Common myeloid progenitor, CD34-positive (primary cell): ENCODE measurements at regions of chr3 and their contacts with region 1.

Region 1: DNA sequence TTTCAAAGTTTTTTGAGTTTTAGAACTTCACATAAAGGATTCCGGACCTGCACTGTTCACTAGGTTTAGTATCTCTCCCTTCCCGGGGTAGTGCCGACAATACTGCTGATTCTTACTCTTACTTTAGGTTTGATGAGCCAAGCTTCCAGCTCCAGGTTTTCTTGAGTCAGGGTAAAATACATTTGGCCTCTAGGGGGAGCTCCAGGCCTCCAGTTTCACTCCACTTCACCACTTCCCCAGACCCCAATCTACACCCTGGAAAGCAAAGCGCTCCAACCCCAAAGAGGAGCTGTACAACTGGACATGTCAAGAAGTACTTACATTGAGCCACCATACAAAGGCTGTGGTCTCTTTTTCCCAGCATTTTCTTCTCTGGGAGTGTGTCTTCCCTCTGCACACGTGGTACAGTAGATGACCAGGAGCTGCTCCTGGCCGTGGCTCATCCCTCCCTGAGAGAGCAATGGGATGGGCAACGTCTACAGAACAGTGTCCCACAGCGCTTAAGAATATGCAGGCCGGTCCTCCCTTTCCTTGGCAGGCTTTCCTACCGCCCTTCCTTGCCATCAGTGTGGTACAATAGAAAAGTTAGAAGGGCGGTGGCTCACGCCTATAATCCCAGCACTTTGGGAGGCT is 93.9 kb upstream of the CCDC80 start:
- DNase-seq: peak; percentile 82 to 89 (median 87)
- H3K4me3 ChIP-seq: no peak overlapping the region
- H3K27ac ChIP-seq: no peak overlapping the region
- H3K4me1 ChIP-seq: peaks cover 7 to 12% (median 9%) of the 10 kb centered on the region in 4 experiments
- H3K27me3 ChIP-seq: peaks cover 0 to 2% (median 0%) of the 10 kb centered on the region in 5 experiments

Region 2: GRCh38 chr3:112642912-112643506 is 91.8 kb before region 1 on chr3:
- CTCF ChIA-PET with region 1: interaction called, 19 read pairs
- POLR2A ChIA-PET with region 1: no interaction called
- DNase-seq: peak; percentile 81 to 92 (median 90)
- H3K4me3 ChIP-seq: peak overlapping the region in 2 of 7 experiments; percentile 13 to 61
- H3K27ac ChIP-seq: no peak overlapping the region
- H3K4me1 ChIP-seq: peaks cover 0 to 5% (median 3%) of the 10 kb centered on the region in 4 experiments
- H3K27me3 ChIP-seq: peaks cover 0 to 16% (median 6%) of the 10 kb centered on the region in 5 experiments

Region 3: GRCh38 chr3:112721231-112721630 is 13.6 kb before region 1 on chr3:
- CTCF ChIA-PET with region 1: no interaction called
- POLR2A ChIA-PET with region 1: no interaction called
- DNase-seq: no peak
- H3K4me3 ChIP-seq: no peak overlapping the region
- H3K27ac ChIP-seq: no peak overlapping the region
- H3K4me1 ChIP-seq: no peaks in the 10 kb centered on the region
- H3K27me3 ChIP-seq: no peaks in the 10 kb centered on the region

Region 4: DNA sequence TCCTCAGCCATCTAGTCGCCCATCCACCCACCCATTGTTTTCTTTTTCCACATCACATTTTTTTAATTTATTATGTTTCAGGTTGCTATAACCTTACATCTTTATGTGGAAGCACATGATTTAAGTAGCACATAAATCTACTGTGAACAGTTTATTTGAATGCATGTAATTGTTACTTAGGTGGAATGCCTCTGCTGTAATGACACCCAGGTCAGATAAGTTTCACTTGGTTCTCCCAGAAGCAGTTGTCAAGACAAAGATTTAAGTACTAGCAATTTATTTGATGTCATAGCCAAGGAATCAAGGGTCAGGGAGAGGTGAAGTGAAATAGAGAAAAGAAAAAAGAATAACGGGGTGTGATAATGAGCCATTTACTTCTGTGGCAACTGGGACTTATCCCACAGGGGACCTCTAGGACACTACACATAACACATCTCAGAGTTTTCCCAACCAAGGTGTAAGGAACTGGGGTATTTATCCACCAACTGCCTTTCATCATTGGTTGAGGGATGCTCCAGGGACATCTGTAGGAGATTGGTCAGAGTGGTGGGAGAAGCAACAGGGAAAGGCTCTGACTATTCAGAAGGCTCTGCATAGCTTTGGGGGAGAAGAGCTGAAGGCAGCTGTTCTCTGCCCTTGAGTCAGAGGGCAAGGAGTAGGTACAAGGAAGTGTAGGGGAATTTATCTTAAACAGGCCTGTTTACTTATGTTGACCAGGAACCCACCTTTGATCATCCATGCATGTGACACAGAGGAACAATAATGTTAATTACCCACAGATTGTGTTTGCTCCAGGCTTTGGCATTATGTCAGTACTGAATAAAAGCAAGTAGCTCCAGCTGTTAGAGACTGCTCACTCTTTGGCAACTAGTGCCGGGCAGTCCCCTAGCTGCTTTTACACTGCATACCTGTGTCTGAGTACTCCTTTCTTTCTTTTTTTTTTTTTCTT is 17.0 kb after region 1 on chr3:
- CTCF ChIA-PET with region 1: interaction called, 18 read pairs
- POLR2A ChIA-PET with region 1: no interaction called
- DNase-seq: no peak
- H3K4me3 ChIP-seq: no peak overlapping the region
- H3K27ac ChIP-seq: no peak overlapping the region
- H3K4me1 ChIP-seq: peaks cover 2 to 6% (median 4%) of the 10 kb centered on the region in 4 experiments
- H3K27me3 ChIP-seq: peaks cover 0 to 6% (median 0%) of the 10 kb centered on the region in 5 experiments

Region 5: DNA sequence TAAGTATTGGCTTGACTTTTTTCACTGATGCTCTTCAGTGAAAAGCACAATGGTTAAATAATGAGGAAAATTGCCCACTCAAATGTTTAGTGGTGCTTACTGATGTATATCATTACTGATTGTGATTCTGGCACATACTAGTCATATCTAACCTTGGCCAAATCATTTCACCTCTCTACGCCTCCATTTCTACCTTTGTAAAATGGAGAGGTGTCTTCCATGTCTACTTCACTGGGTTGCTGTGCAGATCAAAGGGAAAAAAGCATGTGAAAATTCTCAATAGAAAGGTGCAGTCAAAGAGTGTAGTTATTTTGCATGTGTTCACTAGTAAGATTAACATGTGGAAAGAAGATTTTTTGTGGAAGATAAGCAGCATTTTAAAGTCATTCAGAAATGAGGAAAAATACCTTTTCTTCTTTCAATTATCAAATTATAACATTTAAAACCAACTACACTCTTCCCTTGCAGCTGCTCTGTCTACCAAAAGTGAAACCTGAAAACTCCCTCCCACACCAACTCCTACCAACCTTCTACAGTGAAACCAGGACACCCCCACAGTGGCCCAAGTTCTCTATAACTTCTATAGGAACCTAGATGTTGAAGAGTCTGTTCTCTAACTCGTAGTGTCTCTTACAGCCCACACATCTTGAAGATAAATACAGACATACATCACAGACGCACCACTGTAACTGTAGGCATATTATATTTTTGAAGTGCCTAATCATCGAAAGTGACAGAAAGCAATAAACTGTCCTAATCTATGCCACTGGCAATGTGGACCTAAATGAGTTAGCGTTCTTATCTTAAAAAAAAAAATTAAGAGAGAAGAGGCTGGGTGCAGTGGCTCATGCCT is 238.7 kb after region 1 on chr3:
- CTCF ChIA-PET with region 1: interaction called, 127 read pairs
- POLR2A ChIA-PET with region 1: no interaction called
- DNase-seq: peak in 2 of 3 donors; percentile 58 to 61
- H3K4me3 ChIP-seq: peak overlapping the region in 2 of 7 experiments; percentile 10 to 40
- H3K27ac ChIP-seq: no peak overlapping the region
- H3K4me1 ChIP-seq: peaks cover 16 to 42% (median 23%) of the 10 kb centered on the region in 4 experiments
- H3K27me3 ChIP-seq: no peaks in the 10 kb centered on the region